Mammary epithelial cell (primary cell): ENCODE measurements at regions of chr14 and their contacts with region 1.

Region 1: DNA sequence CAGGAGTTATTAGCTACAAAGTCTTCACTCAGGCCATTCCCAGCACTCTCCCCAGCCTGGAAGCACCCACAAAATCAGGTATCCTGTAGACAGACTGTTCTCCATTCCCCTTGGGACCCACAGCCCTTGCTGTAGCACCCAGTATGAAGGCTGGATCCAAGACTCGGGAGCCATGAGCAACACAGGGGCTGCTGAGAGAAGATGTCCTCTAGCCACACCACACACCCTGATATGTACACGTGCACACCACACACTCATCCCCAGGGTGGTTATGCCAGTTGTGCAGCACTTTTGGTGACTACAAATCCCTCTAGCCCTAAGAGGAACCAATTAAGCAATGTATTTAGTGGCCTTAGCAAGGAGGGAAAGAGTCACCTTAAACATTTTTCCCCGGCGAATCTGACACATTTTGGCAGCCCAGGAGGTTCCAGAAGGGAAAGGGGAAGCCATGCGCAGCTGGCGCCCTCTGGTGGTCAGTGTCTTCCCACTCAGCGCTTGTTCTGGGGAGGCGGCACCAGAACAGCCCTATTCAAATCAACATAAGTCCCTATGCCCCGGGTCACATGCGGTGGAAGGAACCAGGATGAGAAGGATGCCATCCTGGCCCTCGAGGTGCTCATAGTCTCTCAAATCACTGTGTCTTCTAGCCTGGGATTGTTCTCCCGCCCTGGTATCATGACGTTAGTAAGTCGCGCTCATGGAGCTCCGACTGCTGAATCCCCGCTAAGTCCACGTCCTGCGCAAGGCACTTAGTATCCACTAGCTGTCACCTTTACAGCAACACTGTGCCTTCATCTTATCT is 96.9 kb downstream of the GCH1 start:
- DNase-seq: peak; percentile 73
- H3K4me3 ChIP-seq: peak overlapping the region in 1 of 3 experiments; percentile 17
- H3K27ac ChIP-seq: no peak overlapping the region
- H3K4me1 ChIP-seq: peaks cover 13% of the 10 kb centered on the region
- H3K27me3 ChIP-seq: no peaks in the 10 kb centered on the region
- CTCF ChIP-seq: peak; percentile 89 to 93

Region 2: DNA sequence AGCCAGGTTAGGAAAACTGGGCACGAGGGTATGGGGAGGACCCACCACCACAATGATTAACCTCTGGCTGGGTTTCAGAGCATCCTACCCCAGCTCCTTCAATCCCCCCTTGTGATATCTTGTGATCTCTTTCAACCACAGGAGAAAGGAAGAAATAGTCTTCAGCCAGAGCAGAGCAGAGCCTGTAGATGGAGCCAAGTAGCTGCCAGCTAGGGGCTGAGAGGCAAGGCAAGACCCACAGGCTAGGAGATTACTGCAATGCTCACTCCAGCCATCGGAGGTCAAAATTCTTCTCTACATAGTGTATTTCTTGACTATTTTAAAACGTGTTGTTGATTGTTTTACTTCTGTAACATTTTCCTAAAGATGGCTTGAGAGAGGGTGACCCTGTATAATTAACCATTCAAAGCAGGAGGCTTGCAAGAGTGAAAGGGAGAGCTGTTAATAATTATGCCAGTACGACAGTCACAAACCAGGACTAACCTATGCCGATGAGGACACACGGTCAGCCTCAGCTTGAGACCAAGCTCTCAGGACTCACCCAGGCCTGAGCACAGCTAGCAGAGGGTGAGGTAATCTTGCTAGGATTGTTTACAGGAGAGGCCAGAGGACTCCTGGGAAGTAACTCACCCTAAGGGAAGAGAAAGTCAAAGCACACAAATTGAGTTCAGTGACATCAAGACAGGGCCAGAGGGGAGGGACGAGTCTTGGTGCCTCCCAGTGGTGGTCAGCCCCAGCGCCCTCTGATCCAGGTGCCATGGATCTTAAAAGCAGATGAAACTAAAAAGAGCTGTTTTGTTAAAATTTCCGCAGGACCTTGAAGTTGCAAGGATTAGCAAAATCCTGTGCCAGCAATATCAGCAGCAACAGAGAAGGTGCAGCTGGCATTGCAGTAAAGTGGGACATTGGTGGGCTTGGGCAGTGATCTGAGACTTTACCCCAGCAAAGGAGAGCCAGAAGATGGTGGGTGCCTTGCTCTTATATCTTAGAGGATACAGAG is 438.7 kb before region 1 on chr14:
- CTCF ChIA-PET with region 1: no interaction called
- dilution Hi-C with region 1: no loop called
- in situ Hi-C with region 1: no loop called
- intact Hi-C with region 1: loop called (anchors 2 kb)
- DNase-seq: peak; percentile 44
- H3K4me3 ChIP-seq: no peak overlapping the region
- H3K27ac ChIP-seq: no peak overlapping the region
- H3K4me1 ChIP-seq: peaks cover 9% of the 10 kb centered on the region
- H3K27me3 ChIP-seq: no peaks in the 10 kb centered on the region
- CTCF ChIP-seq: peak; percentile 54 to 69

Region 3: DNA sequence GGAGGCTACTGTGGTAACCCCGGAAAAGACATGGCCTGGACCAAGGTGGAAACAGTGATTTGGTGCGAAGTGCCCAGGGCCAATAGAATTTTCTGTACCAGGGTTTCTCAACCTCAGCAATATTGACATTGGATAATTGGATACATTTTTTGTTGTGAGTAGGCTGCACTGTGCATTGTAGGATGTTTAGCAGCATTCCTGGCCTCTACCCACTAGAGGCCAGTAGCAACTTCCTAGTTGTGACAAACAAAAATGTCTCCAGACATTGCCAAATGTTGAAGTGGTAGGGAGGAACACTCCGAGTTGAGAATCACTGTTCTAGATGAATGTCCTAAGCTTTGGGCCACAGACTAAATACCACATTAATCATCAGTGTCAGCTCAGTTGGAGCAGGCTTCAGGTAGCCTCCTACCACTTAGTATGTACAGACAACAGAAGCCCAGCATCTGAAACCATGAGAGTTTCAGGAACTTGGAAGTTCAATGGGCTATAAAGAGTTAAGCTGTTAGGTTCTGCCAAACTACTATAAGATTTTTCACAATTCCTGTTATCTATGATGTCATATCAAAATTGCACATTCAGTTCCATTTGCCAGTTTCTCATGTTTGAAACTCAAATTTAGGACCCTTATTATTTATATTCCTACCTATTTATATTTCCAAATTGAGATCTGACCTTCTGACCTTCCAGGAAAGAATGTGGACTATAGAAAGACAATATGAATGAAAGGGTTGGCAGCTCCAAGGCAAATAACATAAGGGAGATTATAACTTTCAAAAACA is 302.1 kb before region 1 on chr14:
- CTCF ChIA-PET with region 1: no interaction called
- dilution Hi-C with region 1: no loop called
- in situ Hi-C with region 1: no loop called
- intact Hi-C with region 1: loop called (anchors 1 kb)
- DNase-seq: peak; percentile 38
- H3K4me3 ChIP-seq: no peak overlapping the region
- H3K27ac ChIP-seq: no peak overlapping the region
- H3K4me1 ChIP-seq: no peaks in the 10 kb centered on the region
- H3K27me3 ChIP-seq: no peaks in the 10 kb centered on the region
- CTCF ChIP-seq: peak; percentile 22 to 57

Region 4: GRCh38 chr14:54555651-54556050 is 250.1 kb before region 1 on chr14:
- CTCF ChIA-PET with region 1: no interaction called
- dilution Hi-C with region 1: no loop called
- in situ Hi-C with region 1: loop called (anchors 10 kb)
- intact Hi-C with region 1: loop called (anchors 2 kb)
- DNase-seq: no peak
- H3K4me3 ChIP-seq: no peak overlapping the region
- H3K27ac ChIP-seq: no peak overlapping the region
- H3K4me1 ChIP-seq: no peaks in the 10 kb centered on the region
- H3K27me3 ChIP-seq: no peaks in the 10 kb centered on the region
- CTCF ChIP-seq: peak; percentile 6 to 18

Region 5: GRCh38 chr14:54691525-54692283 is 114.0 kb before region 1 on chr14:
- CTCF ChIA-PET with region 1: no interaction called
- dilution Hi-C with region 1: no loop called
- in situ Hi-C with region 1: no loop called
- intact Hi-C with region 1: loop called (anchors 1 kb)
- DNase-seq: peak; percentile 64
- H3K4me3 ChIP-seq: no peak overlapping the region
- H3K27ac ChIP-seq: no peak overlapping the region
- H3K4me1 ChIP-seq: peaks cover 8% of the 10 kb centered on the region
- H3K27me3 ChIP-seq: no peaks in the 10 kb centered on the region
- CTCF ChIP-seq: peak; percentile 93 to 97

Region 6: DNA sequence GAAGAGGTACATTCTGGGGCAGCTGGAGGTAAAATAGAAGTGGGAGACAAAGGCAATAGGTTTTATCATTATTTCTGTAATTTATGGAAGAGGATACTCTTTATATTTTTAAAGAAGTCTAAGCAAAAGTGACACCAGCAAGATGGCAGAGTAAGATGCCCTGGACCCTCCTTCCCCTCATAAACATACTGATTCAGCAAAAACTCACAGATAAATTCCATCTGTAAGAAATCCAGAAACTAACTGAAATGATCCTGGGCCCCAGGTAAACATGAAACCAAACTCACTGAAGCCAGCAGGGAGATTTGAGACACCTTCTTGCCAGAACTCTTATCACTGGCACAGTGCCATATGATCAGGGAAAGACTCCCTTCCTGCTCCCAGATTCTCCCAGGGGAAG is 17.0 kb after region 1 on chr14:
- CTCF ChIA-PET with region 1: no interaction called
- dilution Hi-C with region 1: no loop called
- in situ Hi-C with region 1: no loop called
- intact Hi-C with region 1: no loop called
- DNase-seq: no peak
- H3K4me3 ChIP-seq: no peak overlapping the region
- H3K27ac ChIP-seq: no peak overlapping the region
- H3K4me1 ChIP-seq: no peaks in the 10 kb centered on the region
- H3K27me3 ChIP-seq: no peaks in the 10 kb centered on the region
- CTCF ChIP-seq: no peak

Region 7: GRCh38 chr14:54893151-54893760 is 87.5 kb after region 1 on chr14:
- CTCF ChIA-PET with region 1: no interaction called
- dilution Hi-C with region 1: no loop called
- in situ Hi-C with region 1: no loop called
- intact Hi-C with region 1: loop called (anchors 2 kb)
- DNase-seq: peak; percentile 86
- H3K4me3 ChIP-seq: no peak overlapping the region
- H3K27ac ChIP-seq: peak overlapping the region; percentile 18
- H3K4me1 ChIP-seq: peaks cover 7% of the 10 kb centered on the region
- H3K27me3 ChIP-seq: no peaks in the 10 kb centered on the region
- CTCF ChIP-seq: peak; percentile 77 to 89